Activated naive CD4-positive, alpha-beta T cell treated with anti-CD3 and anti-CD28 coated beads, Interleukin-2, amount 10 ng/mL, durations not matched to agents 7 days and 5 days (primary cell): ENCODE measurements at regions of chr11 and their contacts with region 1.

Region 1: DNA sequence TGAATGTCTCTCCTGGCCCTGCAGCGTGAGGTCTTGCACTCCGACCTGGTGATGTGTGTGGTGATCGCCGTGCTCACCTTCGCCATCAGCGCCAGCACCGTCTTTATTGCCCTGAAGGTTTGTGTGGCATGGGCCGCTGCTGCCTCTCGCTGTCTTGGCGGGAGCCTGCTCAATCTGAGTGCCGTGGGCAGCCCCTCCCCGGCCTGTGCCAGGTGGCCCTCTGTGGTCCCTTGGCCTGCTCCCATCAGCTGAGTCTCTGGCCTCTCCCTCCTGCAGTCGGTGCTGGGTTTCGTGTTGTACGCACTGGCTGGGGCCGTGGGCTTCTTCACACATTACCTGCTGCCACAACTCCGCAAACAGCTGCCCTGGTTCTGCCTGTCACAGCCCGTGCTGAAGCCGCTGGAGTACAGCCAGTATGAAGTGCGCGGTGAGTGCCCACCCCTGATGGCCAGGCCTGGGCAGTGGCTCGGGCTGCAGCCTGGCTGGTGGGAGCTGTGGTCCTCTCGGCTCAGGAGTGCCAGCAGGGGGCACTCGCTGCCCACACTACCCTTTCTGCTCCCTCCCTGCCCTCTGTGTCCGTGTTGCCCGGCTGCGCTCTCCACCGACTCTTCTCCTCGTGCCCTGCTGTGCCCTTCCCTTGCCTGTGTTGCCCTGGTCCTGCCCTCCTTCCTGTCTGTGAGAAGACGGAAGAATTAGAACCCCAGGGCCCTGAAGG is 10.2 kb downstream of the PCNX3 start:
- DNase-seq: peak; percentile 72
- H3K4me3 Mint-ChIP-seq: no peak overlapping the region
- H3K27ac Mint-ChIP-seq: peak overlapping the region; percentile 69
- H3K4me1 Mint-ChIP-seq: peaks cover 10% of the 10 kb centered on the region
- H3K27me3 Mint-ChIP-seq: no peaks in the 10 kb centered on the region

Region 2: DNA sequence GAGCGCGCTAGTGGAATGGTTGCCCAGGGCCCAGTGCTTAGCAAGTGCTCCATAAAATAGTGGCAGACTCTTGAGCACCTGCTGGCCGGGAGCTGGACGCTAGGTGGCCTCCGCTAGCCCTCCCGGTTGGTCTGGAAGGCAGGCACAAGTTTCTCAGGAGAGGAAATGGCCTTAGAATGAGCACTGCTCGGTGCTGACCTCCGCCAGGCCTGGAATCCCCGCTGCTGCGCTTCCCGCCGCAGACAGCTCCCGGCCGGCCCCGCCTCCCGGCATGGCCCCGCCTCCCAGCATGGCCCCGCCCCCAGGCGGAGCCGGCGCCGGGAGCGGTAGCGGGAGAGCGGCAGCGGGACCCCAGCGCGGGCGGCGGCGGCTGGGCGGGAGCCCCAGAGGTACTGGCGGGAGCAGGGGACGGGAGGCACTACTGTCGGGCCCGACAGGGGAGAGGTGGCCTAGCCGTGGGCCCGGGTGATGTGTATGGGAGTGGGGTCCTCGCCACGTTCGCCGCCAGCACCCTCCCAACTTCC is 12.1 kb after region 1 on chr11 and contains the start of gene SIPA1:
- CTCF ChIA-PET with region 1: interaction called, 21 read pairs
- DNase-seq: peak; percentile 73
- H3K4me3 Mint-ChIP-seq: peak within 1 kb of the TSS; percentile 88
- H3K27ac Mint-ChIP-seq: peak within 1 kb of the TSS; percentile 94
- H3K4me1 Mint-ChIP-seq: peaks cover 63% of the 10 kb centered on the region
- H3K27me3 Mint-ChIP-seq: no peaks in the 10 kb centered on the region

Region 3: GRCh38 chr11:65652511-65653231 is 26.9 kb after region 1 on chr11:
- CTCF ChIA-PET with region 1: interaction called, 12 read pairs
- DNase-seq: peak; percentile 96
- H3K4me3 Mint-ChIP-seq: peak overlapping the region; percentile 80
- H3K27ac Mint-ChIP-seq: peak overlapping the region; percentile 89
- H3K4me1 Mint-ChIP-seq: peaks cover 46% of the 10 kb centered on the region
- H3K27me3 Mint-ChIP-seq: no peaks in the 10 kb centered on the region

Region 4: DNA sequence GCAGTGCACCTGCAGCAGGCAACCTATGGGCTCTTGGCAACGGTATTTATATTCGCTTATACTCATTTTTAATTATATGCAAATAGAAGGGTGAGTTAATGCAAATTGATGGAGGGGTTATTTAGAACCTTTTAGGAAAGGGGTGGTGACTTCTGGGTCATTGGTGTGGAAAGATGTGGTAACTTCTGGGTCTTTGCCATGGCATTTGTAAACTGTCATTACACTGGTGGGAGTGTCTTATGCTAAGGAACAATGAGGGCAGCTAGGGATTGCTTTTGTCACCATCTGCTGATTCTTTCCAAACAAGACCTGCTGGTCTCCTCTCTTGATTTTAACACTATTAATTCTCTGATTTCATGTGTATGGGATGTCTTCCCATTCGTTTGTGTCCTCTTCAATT is 74.6 kb after region 1 on chr11:
- CTCF ChIA-PET with region 1: interaction called, 12 read pairs
- DNase-seq: no peak
- H3K4me3 Mint-ChIP-seq: no peak overlapping the region
- H3K27ac Mint-ChIP-seq: no peak overlapping the region
- H3K4me1 Mint-ChIP-seq: no peaks in the 10 kb centered on the region
- H3K27me3 Mint-ChIP-seq: peaks cover 50% of the 10 kb centered on the region

Region 5: GRCh38 chr11:65766535-65766934 is 140.8 kb after region 1 on chr11:
- CTCF ChIA-PET with region 1: interaction called, 13 read pairs
- DNase-seq: no peak
- H3K4me3 Mint-ChIP-seq: no peak overlapping the region
- H3K27ac Mint-ChIP-seq: no peak overlapping the region
- H3K4me1 Mint-ChIP-seq: peaks cover 3% of the 10 kb centered on the region
- H3K27me3 Mint-ChIP-seq: peaks cover 9% of the 10 kb centered on the region